Adrenal gland (tissue), 19 donors: ENCODE measurements at regions of chr9 and their contacts with region 1.

Region 1: DNA sequence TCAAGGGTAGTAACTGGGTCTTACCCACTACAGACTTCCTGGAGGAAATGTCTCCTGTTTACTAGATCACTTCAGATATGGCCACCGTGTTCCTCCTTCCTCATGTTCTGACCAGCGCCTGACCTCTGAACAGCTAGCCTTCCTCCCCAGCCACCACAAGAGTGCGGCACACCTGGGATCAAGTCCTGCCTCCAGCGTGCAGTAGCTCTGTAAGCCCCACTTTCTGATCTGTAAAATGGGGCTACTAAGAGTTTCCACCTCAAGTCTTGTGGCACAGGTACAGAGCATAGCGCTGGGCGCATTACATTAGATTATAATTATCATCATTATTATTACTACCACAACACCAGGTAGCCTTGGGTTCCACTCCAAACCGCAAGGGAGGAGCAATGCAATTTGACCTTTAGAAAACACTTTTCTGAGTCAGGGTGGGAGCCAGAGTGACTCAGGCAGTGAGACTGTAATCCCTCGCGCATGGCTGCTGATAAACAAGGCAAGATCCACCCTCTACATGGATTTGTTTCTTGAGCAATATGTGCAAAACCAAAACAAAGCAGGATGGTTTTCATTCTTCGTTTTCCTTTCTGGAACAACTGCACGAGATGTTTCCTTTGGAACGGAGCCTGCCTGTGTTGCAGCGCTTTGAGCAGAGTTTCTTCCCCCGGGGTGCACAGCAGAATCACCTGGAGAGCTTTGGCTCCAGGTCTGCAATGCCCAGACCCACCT is 65.0 kb upstream of the ANGPTL2 start:
- DNase-seq: peak; percentile 54 to 92 (median 90)
- H3K4me3 ChIP-seq: peak overlapping the region in 1 of 4 donors; percentile 4
- H3K27ac ChIP-seq: peak overlapping the region in 4 of 5 donors; percentile 33 to 93 (median 76)
- H3K4me1 ChIP-seq: peaks cover 13 to 28% of the 10 kb centered on the region in 2 donors
- H3K27me3 ChIP-seq: no peaks in the 10 kb centered on the region
- CTCF ChIP-seq: no peak
- POLR2A ChIP-seq: peak in 1 of 2 donors; percentile 27

Region 2: DNA sequence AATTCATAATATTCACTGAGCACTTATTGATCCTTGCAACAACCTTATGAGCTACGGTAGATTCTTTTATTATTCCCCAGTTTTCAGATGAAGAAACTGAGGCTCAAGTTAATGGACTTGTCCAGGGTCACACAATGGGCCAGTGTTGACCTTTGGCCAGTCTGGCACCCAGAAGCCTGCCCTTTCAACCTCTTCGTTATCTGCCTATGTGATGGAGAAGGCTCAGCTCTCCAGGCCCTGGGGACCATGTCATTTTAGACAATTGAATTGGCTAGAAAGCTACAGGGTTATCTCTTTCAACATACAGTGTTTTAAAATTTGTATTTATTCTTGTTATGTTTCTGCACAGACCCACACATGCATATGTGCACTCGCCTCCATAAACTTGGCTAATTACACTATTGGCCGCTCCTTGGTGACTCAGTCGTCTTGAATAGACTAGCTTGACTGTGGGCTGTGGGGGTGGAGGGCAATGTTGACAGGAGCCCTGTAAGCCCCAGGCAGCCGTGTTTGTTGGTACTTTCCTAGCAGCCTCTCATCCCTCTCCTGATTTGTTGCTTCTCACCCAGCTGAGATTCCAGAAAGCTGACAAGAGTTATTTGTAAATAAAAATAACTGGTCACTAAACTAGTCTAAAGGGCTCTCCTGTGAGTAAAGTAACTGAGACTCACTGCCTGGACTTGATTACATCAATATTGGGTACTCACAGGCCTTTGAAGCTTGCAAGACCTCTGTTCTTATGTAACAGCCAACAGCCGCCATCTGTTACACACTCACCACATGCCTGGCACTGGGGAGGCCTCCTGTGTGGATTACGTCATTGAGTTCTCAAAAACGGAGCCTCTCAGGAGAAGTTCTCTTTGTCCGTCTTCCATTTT is 56.5 kb before region 1 on chr9:
- intact Hi-C with region 1: loop called (anchors 5 to 10 kb)
- DNase-seq: peak in 4 of 7 donors; percentile 32 to 91 (median 39)
- H3K4me3 ChIP-seq: no peak overlapping the region
- H3K27ac ChIP-seq: peak overlapping the region in 2 of 5 donors; percentile 53 to 66
- H3K4me1 ChIP-seq: peaks cover 0 to 19% of the 10 kb centered on the region in 2 donors
- H3K27me3 ChIP-seq: no peaks in the 10 kb centered on the region
- CTCF ChIP-seq: no peak
- POLR2A ChIP-seq: no peak

Region 3: GRCh38 chr9:127347831-127348779 is 160.7 kb after region 1 on chr9:
- intact Hi-C with region 1: no loop called
- DNase-seq: peak in 4 of 7 donors; percentile 25 to 64 (median 33)
- H3K4me3 ChIP-seq: no peak overlapping the region
- H3K27ac ChIP-seq: no peak overlapping the region
- H3K4me1 ChIP-seq: no peaks in the 10 kb centered on the region
- H3K27me3 ChIP-seq: no peaks in the 10 kb centered on the region
- CTCF ChIP-seq: peak; percentile 33 to 70 (median 46)
- POLR2A ChIP-seq: no peak